IMR-90 (cell line): ENCODE measurements at regions of chr9 and their contacts with region 1.

Region 1: DNA sequence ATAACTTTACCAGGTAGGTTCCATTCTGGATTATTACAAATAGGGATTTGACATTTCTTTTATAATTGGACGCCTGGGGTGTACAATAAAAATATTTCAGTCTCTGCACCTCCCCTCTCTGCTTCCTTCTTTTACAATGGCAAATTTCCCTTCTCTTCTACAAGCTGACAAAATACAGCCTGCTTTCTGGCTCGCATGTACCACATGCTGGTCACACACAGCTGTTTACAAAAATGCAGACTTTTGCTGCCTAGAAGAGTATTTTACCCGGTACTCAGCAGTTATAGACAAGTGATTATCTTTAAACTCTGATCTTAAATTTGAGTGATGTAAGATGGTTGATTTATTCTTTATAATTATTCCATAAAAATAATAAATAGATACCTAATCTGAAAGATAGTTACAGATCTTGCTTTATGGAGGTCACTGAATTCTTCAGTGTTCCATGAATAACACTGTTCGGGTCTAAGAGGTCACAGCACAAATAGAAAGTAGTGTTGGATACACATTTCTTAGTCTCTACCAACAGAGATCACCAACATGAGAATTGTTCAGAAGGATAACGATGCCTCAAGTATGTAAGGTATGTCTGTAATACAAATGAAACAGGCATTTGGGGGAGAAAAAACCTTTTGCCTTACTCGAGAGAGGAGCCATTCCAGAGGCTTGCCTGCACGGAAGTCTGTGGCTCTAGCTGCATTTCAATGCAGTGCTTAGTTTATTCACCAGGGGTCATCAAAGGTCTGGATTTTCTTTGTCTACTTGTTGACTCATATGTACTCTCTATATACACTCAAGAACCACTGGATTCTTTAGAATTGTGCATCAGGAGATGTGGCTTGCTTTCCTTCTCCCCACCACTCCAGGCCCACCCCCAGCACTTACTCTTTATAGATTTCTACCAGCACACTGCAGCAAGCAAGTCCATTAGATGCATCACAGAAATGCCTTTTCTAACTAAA is 206.6 kb upstream of the RFX3 start:
- DNase-seq: peak; percentile 90
- ATAC-seq: peak; percentile 99
- H3K4me3 ChIP-seq: peak overlapping the region; percentile 10; the same call in 1 of the 2 replicates
- H3K27ac ChIP-seq: peak overlapping the region; percentile 19; the same call in 1 of the 2 replicates
- H3K4me1 ChIP-seq: peaks cover 3% of the 10 kb centered on the region
- H3K27me3 ChIP-seq: no peaks in the 10 kb centered on the region
- CTCF ChIP-seq: peak; percentile 89
- POLR2A ChIP-seq: 0 out of 2 replicates have a peak, but pooled peaks have one; percentile 40
- RAD21 ChIP-seq: peak; percentile 93

Region 2: DNA sequence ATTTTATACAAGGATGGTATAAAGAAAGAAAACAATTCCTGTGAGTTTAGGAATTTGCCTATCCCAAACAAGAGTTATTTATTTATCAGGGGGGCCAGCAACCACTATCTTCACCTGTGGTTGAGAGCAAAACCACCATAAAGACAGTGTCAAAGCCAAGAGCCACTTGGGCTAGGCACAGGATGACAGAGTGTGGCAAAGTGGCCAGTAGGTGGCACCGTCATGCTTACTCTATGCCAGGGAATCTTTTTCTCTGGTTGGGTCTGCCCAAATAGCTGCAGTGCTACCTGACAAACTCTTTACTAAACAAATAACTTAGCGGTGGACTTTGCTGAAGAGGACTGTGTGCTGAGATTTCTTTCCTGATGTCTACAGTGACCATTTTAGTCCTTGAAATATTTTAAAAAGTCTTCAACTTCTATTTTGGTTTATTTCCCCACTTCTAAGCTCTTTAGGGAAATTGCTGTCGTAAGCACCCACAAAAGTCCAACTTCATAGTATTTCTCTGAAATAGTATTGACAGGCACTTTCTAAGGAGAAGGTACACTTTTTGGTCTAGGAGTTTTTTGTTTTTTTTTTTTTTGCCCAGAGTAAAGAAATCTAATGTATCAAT is 491.6 kb before region 1 on chr9:
- CTCF ChIA-PET with region 1: no interaction called
- POLR2A ChIA-PET with region 1: no interaction called
- dilution Hi-C with region 1: no loop called
- in situ Hi-C with region 1: no loop called
- intact Hi-C with region 1: loop called (anchors 5 kb)
- DNase-seq: peak; percentile 63
- ATAC-seq: peak; percentile 90
- H3K4me3 ChIP-seq: no peak overlapping the region
- H3K27ac ChIP-seq: no peak overlapping the region
- H3K4me1 ChIP-seq: peaks cover 3% of the 10 kb centered on the region; the same call in 1 of the 2 replicates
- H3K27me3 ChIP-seq: no peaks in the 10 kb centered on the region
- CTCF ChIP-seq: peak; percentile 78
- POLR2A ChIP-seq: no peak
- RAD21 ChIP-seq: peak; percentile 83

Region 3: GRCh38 chr9:3809724-3810123 is 77.4 kb after region 1 on chr9:
- CTCF ChIA-PET with region 1: no interaction called
- POLR2A ChIA-PET with region 1: no interaction called
- dilution Hi-C with region 1: no loop called
- in situ Hi-C with region 1: no loop called
- intact Hi-C with region 1: no loop called
- DNase-seq: peak; percentile 18
- ATAC-seq: no peak
- H3K4me3 ChIP-seq: no peak overlapping the region
- H3K27ac ChIP-seq: no peak overlapping the region
- H3K4me1 ChIP-seq: no peaks in the 10 kb centered on the region
- H3K27me3 ChIP-seq: no peaks in the 10 kb centered on the region
- CTCF ChIP-seq: no peak
- POLR2A ChIP-seq: no peak
- RAD21 ChIP-seq: no peak

Region 4: GRCh38 chr9:3906432-3907213 is 174.3 kb after region 1 on chr9:
- CTCF ChIA-PET with region 1: no interaction called
- POLR2A ChIA-PET with region 1: no interaction called
- dilution Hi-C with region 1: no loop called
- in situ Hi-C with region 1: no loop called
- intact Hi-C with region 1: loop called (anchors 10 kb)
- DNase-seq: peak; percentile 95
- ATAC-seq: peak; percentile 99
- H3K4me3 ChIP-seq: no peak overlapping the region
- H3K27ac ChIP-seq: peak overlapping the region; percentile 58
- H3K4me1 ChIP-seq: peaks cover 8% of the 10 kb centered on the region
- H3K27me3 ChIP-seq: no peaks in the 10 kb centered on the region
- CTCF ChIP-seq: no peak
- POLR2A ChIP-seq: no peak
- RAD21 ChIP-seq: no peak; the same call in 1 of the 2 replicates

Region 5: GRCh38 chr9:4077499-4078102 is 345.2 kb after region 1 on chr9:
- CTCF ChIA-PET with region 1: no interaction called
- POLR2A ChIA-PET with region 1: no interaction called
- dilution Hi-C with region 1: no loop called
- in situ Hi-C with region 1: loop called (anchors 25 kb)
- intact Hi-C with region 1: loop called (anchors 1 kb)
- DNase-seq: peak; percentile 70
- ATAC-seq: peak; percentile 73
- H3K4me3 ChIP-seq: no peak overlapping the region
- H3K27ac ChIP-seq: no peak overlapping the region
- H3K4me1 ChIP-seq: peaks cover 4% of the 10 kb centered on the region
- H3K27me3 ChIP-seq: no peaks in the 10 kb centered on the region
- CTCF ChIP-seq: peak; percentile 80
- POLR2A ChIP-seq: no peak
- RAD21 ChIP-seq: peak; percentile 72

Region 6: GRCh38 chr9:4228606-4229005 is 496.2 kb after region 1 on chr9:
- CTCF ChIA-PET with region 1: interaction called, 15 read pairs
- POLR2A ChIA-PET with region 1: no interaction called
- dilution Hi-C with region 1: no loop called
- in situ Hi-C with region 1: loop called (anchors 10 kb)
- intact Hi-C with region 1: loop called (anchors 1 kb)
- DNase-seq: peak; percentile 59
- ATAC-seq: peak; percentile 76
- H3K4me3 ChIP-seq: no peak overlapping the region
- H3K27ac ChIP-seq: no peak overlapping the region
- H3K4me1 ChIP-seq: peaks cover 6% of the 10 kb centered on the region
- H3K27me3 ChIP-seq: no peaks in the 10 kb centered on the region
- CTCF ChIP-seq: peak; percentile 63
- POLR2A ChIP-seq: no peak
- RAD21 ChIP-seq: peak; percentile 75

Region 7: GRCh38 chr9:4339357-4339756 is 607.0 kb after region 1 on chr9:
- CTCF ChIA-PET with region 1: no interaction called
- POLR2A ChIA-PET with region 1: no interaction called
- dilution Hi-C with region 1: no loop called
- in situ Hi-C with region 1: no loop called
- intact Hi-C with region 1: loop called (anchors 1 kb)
- DNase-seq: peak; percentile 82
- ATAC-seq: peak; percentile 83
- H3K4me3 ChIP-seq: no peak overlapping the region
- H3K27ac ChIP-seq: no peak overlapping the region
- H3K4me1 ChIP-seq: no peaks in the 10 kb centered on the region; the same call in 1 of the 2 replicates
- H3K27me3 ChIP-seq: no peaks in the 10 kb centered on the region
- CTCF ChIP-seq: peak; percentile 95
- POLR2A ChIP-seq: no peak
- RAD21 ChIP-seq: peak; percentile 86

Region 8: GRCh38 chr9:4375424-4376200 is 643.3 kb after region 1 on chr9:
- CTCF ChIA-PET with region 1: no interaction called
- POLR2A ChIA-PET with region 1: no interaction called
- dilution Hi-C with region 1: no loop called
- in situ Hi-C with region 1: no loop called
- intact Hi-C with region 1: loop called (anchors 2 kb)
- DNase-seq: peak; percentile 82
- ATAC-seq: peak; percentile 82
- H3K4me3 ChIP-seq: no peak overlapping the region
- H3K27ac ChIP-seq: no peak overlapping the region
- H3K4me1 ChIP-seq: no peaks in the 10 kb centered on the region
- H3K27me3 ChIP-seq: peaks cover 8% of the 10 kb centered on the region
- CTCF ChIP-seq: peak; percentile 84
- POLR2A ChIP-seq: no peak
- RAD21 ChIP-seq: peak; percentile 93